Activated T-helper 1 cell treated with anti-CD3 and anti-CD28 coated beads, Interleukin-12 subunit alpha, Interleukin-12 subunit beta, Interleukin-2, Interleukin-4 antibody, amounts not matched to agents 30 ng/mL and 10 ng/mL and 1 ng/mL, durations not matched to agents 14 hours and 24 hours and 36 hours (primary cell): ENCODE measurements at regions of chr22 and their contacts with region 1.

Region 1: DNA sequence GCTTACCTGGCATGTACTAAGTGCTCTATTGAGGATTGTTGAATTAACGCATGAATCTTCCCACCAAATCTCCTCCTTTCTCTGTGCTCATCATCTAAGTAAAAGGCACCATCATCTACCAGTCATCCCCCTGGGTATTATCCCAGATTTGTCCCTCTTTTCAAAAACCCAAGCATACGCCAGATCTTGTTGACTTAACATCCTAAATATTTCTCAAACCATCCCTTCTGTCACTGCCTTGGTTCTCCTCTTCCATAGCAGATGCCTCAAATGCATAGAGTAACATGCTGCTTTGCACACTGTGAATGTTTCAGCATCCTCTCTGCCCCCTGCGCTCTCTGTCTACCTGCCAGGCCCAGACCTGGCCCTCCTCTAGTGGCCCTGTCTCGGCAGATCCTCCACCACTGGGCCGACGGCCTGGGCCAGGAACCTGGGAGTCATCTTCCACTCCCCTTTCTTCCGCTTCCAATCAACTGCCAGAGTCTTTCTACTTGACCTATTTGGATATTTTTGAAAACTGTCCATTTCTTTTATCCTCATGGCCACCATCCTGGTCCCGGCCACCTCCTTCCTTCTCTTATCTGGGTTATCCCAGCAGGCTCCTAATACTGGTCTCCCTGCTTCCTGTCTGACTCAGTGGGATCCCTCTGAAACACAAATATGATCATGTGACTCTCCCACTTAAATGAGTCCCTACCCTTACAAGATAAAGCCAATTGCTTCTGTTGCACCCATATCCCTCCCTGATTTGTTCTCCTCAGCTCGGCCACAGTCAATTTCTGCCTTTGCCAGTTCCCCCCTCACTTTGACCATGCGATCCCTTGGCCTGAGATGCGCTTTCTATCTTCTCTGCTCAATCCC is 3.4 kb upstream of the TAB1 start:
- DNase-seq: no peak
- H3K4me3 Mint-ChIP-seq: no peak overlapping the region
- H3K27ac Mint-ChIP-seq: no peak overlapping the region
- H3K4me1 Mint-ChIP-seq: peaks cover 2% of the 10 kb centered on the region
- H3K27me3 Mint-ChIP-seq: peaks cover 6% of the 10 kb centered on the region

Region 2: GRCh38 chr22:39414886-39415285 is 18.7 kb after region 1 on chr22:
- intact Hi-C with region 1: loop called (anchors 1 kb)
- DNase-seq: no peak
- H3K4me3 Mint-ChIP-seq: no peak overlapping the region
- H3K27ac Mint-ChIP-seq: no peak overlapping the region
- H3K4me1 Mint-ChIP-seq: peaks cover 24% of the 10 kb centered on the region
- H3K27me3 Mint-ChIP-seq: no peaks in the 10 kb centered on the region

Region 3: GRCh38 chr22:39490135-39490798 is 94.1 kb after region 1 on chr22:
- intact Hi-C with region 1: loop called (anchors 1 kb)
- DNase-seq: peak; percentile 70
- H3K4me3 Mint-ChIP-seq: no peak overlapping the region
- H3K27ac Mint-ChIP-seq: peak overlapping the region; percentile 76
- H3K4me1 Mint-ChIP-seq: peaks cover 25% of the 10 kb centered on the region
- H3K27me3 Mint-ChIP-seq: peaks cover 2% of the 10 kb centered on the region

Region 4: DNA sequence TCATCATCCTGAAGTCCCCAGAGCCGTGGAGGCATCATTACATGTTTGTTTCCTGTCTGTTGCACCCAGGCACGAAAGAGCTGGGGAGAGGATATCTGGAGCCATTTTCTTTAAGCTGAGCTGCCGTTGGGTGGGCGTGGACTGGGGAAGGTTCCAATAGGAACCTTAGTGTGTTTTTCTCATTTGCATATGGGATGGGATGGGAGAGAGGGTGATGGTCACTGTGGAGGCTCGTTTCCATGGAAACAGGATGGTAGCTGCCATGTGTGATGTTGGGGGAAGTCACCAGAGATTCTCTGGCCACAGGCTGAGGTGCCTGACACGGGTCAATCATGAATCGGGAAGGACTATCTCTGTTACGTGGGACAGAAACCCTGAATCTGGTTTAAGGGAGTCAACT is 214.1 kb after region 1 on chr22:
- intact Hi-C with region 1: no loop called
- DNase-seq: no peak
- H3K4me3 Mint-ChIP-seq: no peak overlapping the region
- H3K27ac Mint-ChIP-seq: no peak overlapping the region
- H3K4me1 Mint-ChIP-seq: peaks cover 9% of the 10 kb centered on the region
- H3K27me3 Mint-ChIP-seq: peaks cover 33% of the 10 kb centered on the region